ENCODE measurements at regions of chr19 and their contacts with region 1.

Region 1: GRCh38 chr19:54023191-54023590 is 31.8 kb downstream of the CACNG6 start:
- DNase-seq: peak in 1 of 2 experiments; percentile 45
- ATAC-seq: no peak
- H3K4me3 ChIP-seq: no peak overlapping the region
- H3K27ac ChIP-seq: peak overlapping the region; percentile 85 to 92
- H3K4me1 ChIP-seq: peaks cover 40% of the 10 kb centered on the region
- CTCF ChIP-seq: no peak
- EP300 ChIP-seq: no peak
- POLR2A ChIP-seq: no peak
- RAD21 ChIP-seq: no peak

Region 2: DNA sequence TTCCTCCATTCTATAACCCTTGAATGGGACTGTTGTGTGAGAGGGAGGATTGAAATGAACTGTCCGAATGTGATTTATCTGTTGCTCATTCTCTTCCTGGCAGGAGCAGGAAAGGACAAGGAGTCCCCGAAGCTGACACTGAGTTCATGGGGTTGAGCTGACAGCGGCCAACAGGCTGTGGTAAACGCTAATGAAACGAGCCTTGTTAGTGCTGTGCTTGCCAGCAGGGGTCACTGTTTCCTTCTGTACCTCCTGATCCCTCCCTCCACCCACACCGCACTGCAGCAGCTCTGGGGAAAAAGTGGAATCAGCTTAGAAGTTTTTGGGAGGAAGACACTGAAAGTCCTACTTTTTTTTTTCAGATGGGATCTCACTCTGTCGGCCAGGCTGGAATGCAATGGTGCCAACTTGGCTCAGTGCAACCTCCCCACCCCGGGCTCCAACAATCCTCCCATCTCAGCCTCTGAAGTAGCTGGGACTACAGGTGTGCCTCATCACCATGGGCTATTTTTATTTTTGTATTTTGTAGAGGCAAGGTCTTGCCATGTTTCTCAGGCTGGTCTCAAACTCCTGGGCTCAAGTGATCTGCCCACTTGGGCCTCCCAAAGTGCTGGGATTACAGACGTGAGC is 598.1 kb before region 1 on chr19:
- CTCF ChIA-PET with region 1: no interaction called
- POLR2A ChIA-PET with region 1: no interaction called
- DNase-seq: peak in 1 of 2 experiments; percentile 53
- ATAC-seq: peak in 1 of 2 experiments; percentile 72; a peak in 3 of 6 replicates
- H3K4me3 ChIP-seq: no peak overlapping the region
- H3K27ac ChIP-seq: no peak overlapping the region
- H3K4me1 ChIP-seq: no peaks in the 10 kb centered on the region
- CTCF ChIP-seq: no peak
- EP300 ChIP-seq: no peak
- POLR2A ChIP-seq: no peak
- RAD21 ChIP-seq: peak in 1 of 2 experiments; percentile 55; a peak in 2 of 5 replicates

Region 3: DNA sequence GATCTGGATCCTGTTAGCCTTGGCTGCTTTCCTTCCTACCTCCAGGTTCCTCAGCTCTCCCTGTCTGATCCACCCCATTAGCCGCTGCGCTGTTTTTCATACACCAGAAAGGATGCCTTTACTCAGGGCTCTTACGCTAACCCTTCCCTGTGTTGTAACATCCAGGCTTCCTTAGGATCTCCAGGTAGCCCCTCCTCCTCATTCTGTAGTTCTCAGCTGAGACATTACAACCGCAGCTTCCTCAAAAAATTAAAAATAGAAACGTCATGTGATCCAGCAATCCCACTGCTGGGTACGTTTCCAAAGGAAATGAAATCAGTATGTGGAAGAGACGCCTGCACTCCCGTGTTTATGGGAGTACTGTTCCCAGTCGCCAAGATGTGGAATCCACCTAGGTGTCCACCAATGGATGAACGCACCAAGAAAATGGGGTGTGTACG is 173.9 kb before region 1 on chr19:
- CTCF ChIA-PET with region 1: interaction called, 88 read pairs
- POLR2A ChIA-PET with region 1: no interaction called
- DNase-seq: no peak
- ATAC-seq: no peak
- H3K4me3 ChIP-seq: no peak overlapping the region
- H3K27ac ChIP-seq: no peak overlapping the region
- H3K4me1 ChIP-seq: peaks cover 8% of the 10 kb centered on the region; the same call in 2 of the 3 replicates
- CTCF ChIP-seq: no peak
- EP300 ChIP-seq: no peak
- POLR2A ChIP-seq: no peak
- RAD21 ChIP-seq: no peak

Region 4: GRCh38 chr19:53898636-53899341 is 124.4 kb before region 1 on chr19:
- CTCF ChIA-PET with region 1: interaction called, 62 read pairs
- POLR2A ChIA-PET with region 1: interaction called, 7 read pairs
- DNase-seq: peak in 1 of 2 experiments; percentile 69
- ATAC-seq: peak; percentile 40 to 66; a peak in 5 of 6 replicates
- H3K4me3 ChIP-seq: peak overlapping the region; percentile 32; the same call in 2 of the 3 replicates
- H3K27ac ChIP-seq: peak overlapping the region in 1 of 2 experiments; percentile 8; a peak in 1 of 6 replicates
- H3K4me1 ChIP-seq: peaks cover 15% of the 10 kb centered on the region; the same call in 2 of the 3 replicates
- CTCF ChIP-seq: no peak
- EP300 ChIP-seq: no peak
- POLR2A ChIP-seq: no peak
- RAD21 ChIP-seq: no peak

Region 5: GRCh38 chr19:53936029-53936428 is 87.2 kb before region 1 on chr19:
- CTCF ChIA-PET with region 1: interaction called, 11 read pairs
- POLR2A ChIA-PET with region 1: no interaction called
- DNase-seq: no peak
- ATAC-seq: no peak
- H3K4me3 ChIP-seq: no peak overlapping the region
- H3K27ac ChIP-seq: no peak overlapping the region
- H3K4me1 ChIP-seq: no peaks in the 10 kb centered on the region
- CTCF ChIP-seq: no peak
- EP300 ChIP-seq: no peak
- POLR2A ChIP-seq: no peak
- RAD21 ChIP-seq: no peak

Region 6: GRCh38 chr19:53977429-53977990 is 45.7 kb before region 1 on chr19:
- CTCF ChIA-PET with region 1: interaction called, 59 read pairs
- POLR2A ChIA-PET with region 1: interaction called, 31 read pairs
- DNase-seq: peak; percentile 90 to 96
- ATAC-seq: peak; percentile 17 to 41
- H3K4me3 ChIP-seq: peak overlapping the region; percentile 39
- H3K27ac ChIP-seq: peak overlapping the region; percentile 70 to 97
- H3K4me1 ChIP-seq: peaks cover 10% of the 10 kb centered on the region; the same call in 2 of the 3 replicates
- CTCF ChIP-seq: no peak
- EP300 ChIP-seq: no peak
- POLR2A ChIP-seq: no peak
- RAD21 ChIP-seq: no peak

Region 7: GRCh38 chr19:54002495-54003315 is 20.5 kb before region 1 on chr19:
- CTCF ChIA-PET with region 1: interaction called, 27 read pairs
- POLR2A ChIA-PET with region 1: interaction called, 3 read pairs
- DNase-seq: no peak
- ATAC-seq: peak in 1 of 2 experiments; percentile 6; a peak in 3 of 6 replicates
- H3K4me3 ChIP-seq: no peak overlapping the region
- H3K27ac ChIP-seq: peak overlapping the region; percentile 33 to 71; a peak in 5 of 6 replicates
- H3K4me1 ChIP-seq: peaks cover 43% of the 10 kb centered on the region
- CTCF ChIP-seq: no peak
- EP300 ChIP-seq: no peak
- POLR2A ChIP-seq: no peak
- RAD21 ChIP-seq: no peak

Region 8: GRCh38 chr19:54041969-54042606 is 18.9 kb after region 1 on chr19:
- CTCF ChIA-PET with region 1: interaction called, 69 read pairs
- POLR2A ChIA-PET with region 1: interaction called, 4 read pairs
- DNase-seq: no peak
- ATAC-seq: peak; percentile 64 to 66; a peak in 5 of 6 replicates
- H3K4me3 ChIP-seq: no peak overlapping the region
- H3K27ac ChIP-seq: peak overlapping the region in 1 of 2 experiments; percentile 42; a peak in 1 of 6 replicates
- H3K4me1 ChIP-seq: peaks cover 10% of the 10 kb centered on the region
- CTCF ChIP-seq: no peak
- EP300 ChIP-seq: no peak
- POLR2A ChIP-seq: no peak
- RAD21 ChIP-seq: no peak

Region 9: GRCh38 chr19:54107951-54108381 is 84.8 kb after region 1 on chr19:
- CTCF ChIA-PET with region 1: no interaction called
- POLR2A ChIA-PET with region 1: no interaction called
- DNase-seq: no peak
- ATAC-seq: no peak
- H3K4me3 ChIP-seq: no peak overlapping the region
- H3K27ac ChIP-seq: no peak overlapping the region
- H3K4me1 ChIP-seq: 0 out of 3 replicates have a peak, but pooled peaks cover 8% of the 10 kb centered on the region
- CTCF ChIP-seq: no peak
- EP300 ChIP-seq: no peak
- POLR2A ChIP-seq: no peak
- RAD21 ChIP-seq: no peak